ENCODE measurements at regions of chr6 and their contacts with region 1.

Region 1: GRCh38 chr6:166775180-166776081 is 148.4 kb upstream of the RPS6KA2 start:
- DNase-seq: peak; percentile 75
- ATAC-seq: peak; percentile 93
- H3K4me3 ChIP-seq: no peak overlapping the region
- H3K27ac ChIP-seq: no peak overlapping the region
- H3K4me1 ChIP-seq: no peaks in the 10 kb centered on the region
- H3K27me3 ChIP-seq: peaks cover 21% of the 10 kb centered on the region; the same call in 1 of the 2 replicates
- CTCF ChIP-seq: peak; percentile 84
- POLR2A ChIP-seq: no peak
- RAD21 ChIP-seq: peak; percentile 83

Region 2: GRCh38 chr6:166989427-166990032 is 214.1 kb after region 1 on chr6:
- CTCF ChIA-PET with region 1: interaction called, 16 read pairs
- POLR2A ChIA-PET with region 1: no interaction called
- dilution Hi-C with region 1: no loop called
- in situ Hi-C with region 1: no loop called
- intact Hi-C with region 1: loop called (anchors 1 kb)
- DNase-seq: peak; percentile 49
- ATAC-seq: peak; percentile 79
- H3K4me3 ChIP-seq: no peak overlapping the region
- H3K27ac ChIP-seq: no peak overlapping the region
- H3K4me1 ChIP-seq: no peaks in the 10 kb centered on the region
- H3K27me3 ChIP-seq: no peaks in the 10 kb centered on the region
- CTCF ChIP-seq: peak; percentile 67
- POLR2A ChIP-seq: no peak
- RAD21 ChIP-seq: peak; percentile 72